Caco-2 (cell line): ENCODE measurements at regions of chr2 and their contacts with region 1.

Region 1: DNA sequence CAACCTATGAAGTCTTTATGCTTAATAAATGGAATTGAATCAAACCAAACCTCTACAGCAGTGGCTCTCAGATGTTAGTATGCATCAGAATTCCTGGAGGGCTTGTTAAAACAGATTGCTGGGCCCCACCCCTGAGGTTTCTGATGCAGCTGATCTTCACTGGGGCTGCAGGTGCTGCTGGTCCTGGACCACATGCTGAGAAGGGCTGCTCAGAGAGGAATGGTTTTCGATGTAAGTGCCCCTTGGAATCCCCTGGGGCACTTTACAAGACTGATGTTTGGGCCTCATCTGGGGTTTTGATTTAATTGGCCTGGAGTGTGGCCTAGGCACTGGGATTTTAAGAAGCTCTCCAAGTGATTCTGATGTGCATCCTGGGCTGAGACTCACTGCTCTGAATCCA is 403.8 kb upstream of the HS6ST1 start:
- DNase-seq: no peak
- H3K4me3 ChIP-seq: no peak overlapping the region
- H3K4me3 Mint-ChIP-seq: no peak overlapping the region
- H3K27ac Mint-ChIP-seq: no peak overlapping the region
- H3K4me1 ChIP-seq: no peaks in the 10 kb centered on the region
- H3K4me1 Mint-ChIP-seq: no peaks in the 10 kb centered on the region
- H3K27me3 ChIP-seq: no peaks in the 10 kb centered on the region
- H3K27me3 Mint-ChIP-seq: peaks cover 22% of the 10 kb centered on the region
- CTCF ChIP-seq: no peak

Region 2: GRCh38 chr2:128062571-128062970 is 659.9 kb before region 1 on chr2:
- CTCF ChIA-PET with region 1: no interaction called
- POLR2A ChIA-PET with region 1: no interaction called
- intact Hi-C with region 1: no loop called
- DNase-seq: no peak
- H3K4me3 ChIP-seq: no peak overlapping the region
- H3K4me3 Mint-ChIP-seq: no peak overlapping the region
- H3K27ac Mint-ChIP-seq: no peak overlapping the region
- H3K4me1 ChIP-seq: peaks cover 4% of the 10 kb centered on the region
- H3K4me1 Mint-ChIP-seq: peaks cover 9% of the 10 kb centered on the region
- H3K27me3 ChIP-seq: no peaks in the 10 kb centered on the region
- H3K27me3 Mint-ChIP-seq: no peaks in the 10 kb centered on the region
- CTCF ChIP-seq: no peak

Region 3: DNA sequence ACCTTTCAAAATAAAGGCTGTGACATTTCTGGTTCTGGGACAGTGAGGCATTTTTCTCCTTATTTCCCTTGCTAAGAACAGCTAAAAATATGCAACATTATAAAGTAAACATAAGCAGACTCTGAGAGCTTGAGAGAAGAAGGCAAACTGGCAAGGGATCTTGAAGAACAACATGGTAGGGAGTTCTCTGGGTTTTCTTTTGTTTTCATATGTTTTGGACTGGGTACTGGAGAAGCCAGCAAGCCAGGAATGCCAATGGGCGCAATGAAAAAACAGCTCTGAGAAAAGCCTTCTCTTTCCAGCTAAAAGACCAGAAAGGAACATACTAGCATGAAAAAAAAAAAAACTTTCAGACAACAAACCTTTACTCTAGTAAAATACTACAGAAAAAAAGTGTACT is 52.4 kb before region 1 on chr2:
- CTCF ChIA-PET with region 1: no interaction called
- POLR2A ChIA-PET with region 1: no interaction called
- intact Hi-C with region 1: no loop called
- DNase-seq: no peak
- H3K4me3 ChIP-seq: no peak overlapping the region
- H3K4me3 Mint-ChIP-seq: no peak overlapping the region
- H3K27ac Mint-ChIP-seq: no peak overlapping the region
- H3K4me1 ChIP-seq: no peaks in the 10 kb centered on the region
- H3K4me1 Mint-ChIP-seq: no peaks in the 10 kb centered on the region
- H3K27me3 ChIP-seq: peaks cover 1% of the 10 kb centered on the region; the same call in 1 of the 2 replicates
- H3K27me3 Mint-ChIP-seq: peaks cover 19% of the 10 kb centered on the region
- CTCF ChIP-seq: no peak

Region 4: DNA sequence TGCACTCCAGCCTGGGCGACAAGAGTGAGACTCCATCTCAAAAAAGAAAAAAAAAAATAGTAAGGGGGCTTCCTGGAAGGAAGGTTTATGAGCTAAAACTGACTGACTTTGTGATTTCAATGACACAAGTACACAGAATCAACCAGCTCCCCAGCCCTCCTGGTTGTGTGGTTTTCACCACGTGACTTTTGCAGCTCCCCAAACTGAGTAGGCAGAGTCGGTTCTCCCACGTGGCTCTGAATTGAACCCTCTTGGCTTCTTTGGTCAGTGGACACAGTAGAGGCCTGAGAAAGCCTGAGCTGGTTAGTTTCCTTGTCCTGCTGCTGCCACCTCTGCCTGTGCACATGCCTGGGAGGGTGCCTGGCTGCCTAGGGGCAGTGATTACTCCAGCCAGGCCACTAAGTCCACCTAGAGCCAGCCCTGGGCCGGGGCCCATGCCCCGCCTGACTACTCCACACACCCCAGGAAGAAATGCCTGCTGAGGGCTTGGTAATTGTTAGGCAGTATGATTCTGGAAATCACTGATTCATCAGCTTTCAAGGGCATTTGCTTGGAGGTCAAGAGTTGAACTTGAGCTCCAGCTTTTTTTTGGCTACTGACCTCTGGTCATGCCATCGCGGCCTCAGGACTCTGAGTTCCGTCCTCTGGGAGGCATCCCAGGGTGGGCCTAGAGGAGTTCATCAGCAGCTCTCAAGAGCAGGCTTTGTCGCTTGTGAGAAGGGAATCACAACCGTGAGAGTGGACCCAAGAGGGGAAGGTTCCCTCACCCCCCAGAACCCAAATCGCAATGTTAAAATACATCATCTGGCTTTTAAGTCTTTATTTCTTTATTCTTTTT is 28.1 kb after region 1 on chr2:
- CTCF ChIA-PET with region 1: no interaction called
- POLR2A ChIA-PET with region 1: no interaction called
- intact Hi-C with region 1: loop called (anchors 2 kb)
- DNase-seq: no peak
- H3K4me3 ChIP-seq: no peak overlapping the region
- H3K4me3 Mint-ChIP-seq: no peak overlapping the region
- H3K27ac Mint-ChIP-seq: no peak overlapping the region
- H3K4me1 ChIP-seq: no peaks in the 10 kb centered on the region
- H3K4me1 Mint-ChIP-seq: no peaks in the 10 kb centered on the region
- H3K27me3 ChIP-seq: no peaks in the 10 kb centered on the region; the same call in 1 of the 2 replicates
- H3K27me3 Mint-ChIP-seq: peaks cover 24% of the 10 kb centered on the region
- CTCF ChIP-seq: no peak

Region 5: DNA sequence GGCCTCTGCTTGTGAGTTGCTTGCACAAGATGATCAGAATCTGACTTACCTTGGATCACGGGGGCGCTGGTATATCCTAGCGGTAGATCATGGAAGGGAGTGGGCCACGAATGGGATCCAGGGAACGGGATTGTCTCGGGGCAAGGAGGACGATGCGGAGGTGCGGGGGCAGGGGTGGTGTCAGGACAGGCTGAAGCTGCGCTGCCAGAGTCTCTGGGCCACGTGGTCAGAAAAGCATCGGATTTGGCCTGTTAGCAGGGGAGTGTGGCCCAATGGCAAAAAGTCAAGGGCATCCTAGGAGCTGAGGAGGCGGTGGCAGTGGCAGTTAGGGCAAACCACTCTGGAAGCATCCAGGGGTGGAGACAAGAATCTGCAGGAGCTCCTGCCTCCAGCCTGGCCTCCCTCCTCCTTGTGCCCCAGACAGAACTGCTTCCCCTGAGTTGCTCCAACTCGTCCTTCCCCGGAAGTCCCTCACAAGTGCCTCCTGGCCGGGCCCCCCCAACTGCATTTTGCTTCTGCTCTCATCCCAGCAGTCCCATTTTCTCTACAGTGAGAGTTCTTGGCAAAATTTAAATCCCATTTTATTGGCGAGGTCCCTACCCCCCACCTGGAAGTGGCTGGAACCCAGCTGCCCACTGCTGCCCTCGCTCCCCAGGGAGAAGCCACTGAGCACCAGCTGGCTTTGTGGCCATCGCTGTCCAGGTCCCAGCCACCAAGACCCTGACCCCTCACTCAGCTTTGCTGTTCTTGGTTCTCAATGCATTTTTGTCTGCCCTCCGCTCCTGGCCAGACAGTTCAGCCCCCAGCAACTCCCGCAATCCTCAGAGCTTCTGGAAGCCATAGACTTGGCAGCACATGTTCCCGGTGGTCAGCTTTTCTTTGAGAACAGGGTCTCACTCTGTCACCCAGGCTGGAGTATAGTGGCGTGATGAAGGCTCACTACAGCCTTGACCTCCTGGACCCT is 1428.0 kb after region 1 on chr2:
- CTCF ChIA-PET with region 1: no interaction called
- POLR2A ChIA-PET with region 1: no interaction called
- intact Hi-C with region 1: no loop called
- DNase-seq: peak in 1 of 2 experiments; percentile 28
- H3K4me3 ChIP-seq: no peak overlapping the region
- H3K4me3 Mint-ChIP-seq: no peak overlapping the region
- H3K27ac Mint-ChIP-seq: peak overlapping the region; percentile 21
- H3K4me1 ChIP-seq: no peaks in the 10 kb centered on the region
- H3K4me1 Mint-ChIP-seq: no peaks in the 10 kb centered on the region
- H3K27me3 ChIP-seq: no peaks in the 10 kb centered on the region
- H3K27me3 Mint-ChIP-seq: no peaks in the 10 kb centered on the region
- CTCF ChIP-seq: no peak